Dendritic cell treated with granulocyte-macrophage colony-stimulating factor and Interleukin-4, amounts not matched to agents 40 ng/mL and 50 ng/mL, for 4 days (primary cell): ENCODE measurements at regions of chr7 and their contacts with region 1.

Region 1: GRCh38 chr7:114670676-114671075 is 251.2 kb upstream of the MDFIC start:
- H3K4me3 Mint-ChIP-seq: no peak overlapping the region
- H3K27ac Mint-ChIP-seq: no peak overlapping the region
- H3K4me1 Mint-ChIP-seq: no peaks in the 10 kb centered on the region
- H3K27me3 Mint-ChIP-seq: no peaks in the 10 kb centered on the region

Region 2: DNA sequence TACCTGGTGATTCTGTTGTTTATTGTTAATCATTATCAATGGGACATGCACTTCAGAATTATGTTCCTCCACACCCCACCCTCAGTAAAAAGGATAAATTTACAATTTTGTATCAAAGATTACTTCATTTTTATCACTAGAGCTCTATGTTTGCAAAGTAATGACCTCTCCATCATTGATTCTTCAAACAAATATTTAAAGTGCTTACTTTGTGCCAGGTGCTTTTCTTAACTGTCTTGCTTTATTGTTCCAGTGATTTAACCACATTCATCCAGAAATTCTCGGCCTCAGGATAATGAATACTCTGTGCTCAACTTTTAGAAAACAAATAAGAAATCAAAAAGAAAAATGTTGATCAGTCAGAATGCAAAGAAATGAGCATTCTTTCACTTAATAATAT is 401.0 kb before region 1 on chr7:
- intact Hi-C with region 1: no loop called
- H3K4me3 Mint-ChIP-seq: no peak overlapping the region
- H3K27ac Mint-ChIP-seq: no peak overlapping the region
- H3K4me1 Mint-ChIP-seq: no peaks in the 10 kb centered on the region
- H3K27me3 Mint-ChIP-seq: no peaks in the 10 kb centered on the region

Region 3: GRCh38 chr7:114755856-114756255 is 85.2 kb after region 1 on chr7:
- intact Hi-C with region 1: loop called (anchors 1 kb)
- H3K4me3 Mint-ChIP-seq: no peak overlapping the region
- H3K27ac Mint-ChIP-seq: no peak overlapping the region
- H3K4me1 Mint-ChIP-seq: no peaks in the 10 kb centered on the region
- H3K27me3 Mint-ChIP-seq: no peaks in the 10 kb centered on the region